HEK293 (cell line): ENCODE measurements at regions of chr1 and their contacts with region 1.

Region 1: DNA sequence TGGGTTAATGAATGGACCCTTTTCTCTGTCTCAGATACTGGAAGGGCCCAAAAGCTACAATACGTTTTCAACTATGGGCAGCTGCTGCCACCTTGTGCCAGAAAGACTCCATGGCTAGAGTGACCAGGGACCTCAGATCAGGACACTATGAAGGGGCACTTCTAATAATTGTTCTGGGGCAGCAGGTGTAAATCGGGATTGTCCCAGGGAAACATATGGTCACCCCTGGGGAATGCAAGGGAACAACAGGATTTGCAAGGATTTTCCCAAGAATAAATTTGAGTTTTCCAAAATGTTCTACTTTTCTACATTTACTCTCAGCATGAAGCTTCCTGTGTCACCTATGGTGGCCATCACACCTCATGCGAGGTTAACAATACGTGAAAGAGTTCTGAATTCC is 12.0 kb upstream of the FCAMR start:
- H3K4me3 ChIP-seq: no peak overlapping the region
- H3K27ac ChIP-seq: no peak overlapping the region
- H3K4me1 ChIP-seq: no peaks in the 10 kb centered on the region
- CTCF ChIP-seq: peak; percentile 63

Region 2: DNA sequence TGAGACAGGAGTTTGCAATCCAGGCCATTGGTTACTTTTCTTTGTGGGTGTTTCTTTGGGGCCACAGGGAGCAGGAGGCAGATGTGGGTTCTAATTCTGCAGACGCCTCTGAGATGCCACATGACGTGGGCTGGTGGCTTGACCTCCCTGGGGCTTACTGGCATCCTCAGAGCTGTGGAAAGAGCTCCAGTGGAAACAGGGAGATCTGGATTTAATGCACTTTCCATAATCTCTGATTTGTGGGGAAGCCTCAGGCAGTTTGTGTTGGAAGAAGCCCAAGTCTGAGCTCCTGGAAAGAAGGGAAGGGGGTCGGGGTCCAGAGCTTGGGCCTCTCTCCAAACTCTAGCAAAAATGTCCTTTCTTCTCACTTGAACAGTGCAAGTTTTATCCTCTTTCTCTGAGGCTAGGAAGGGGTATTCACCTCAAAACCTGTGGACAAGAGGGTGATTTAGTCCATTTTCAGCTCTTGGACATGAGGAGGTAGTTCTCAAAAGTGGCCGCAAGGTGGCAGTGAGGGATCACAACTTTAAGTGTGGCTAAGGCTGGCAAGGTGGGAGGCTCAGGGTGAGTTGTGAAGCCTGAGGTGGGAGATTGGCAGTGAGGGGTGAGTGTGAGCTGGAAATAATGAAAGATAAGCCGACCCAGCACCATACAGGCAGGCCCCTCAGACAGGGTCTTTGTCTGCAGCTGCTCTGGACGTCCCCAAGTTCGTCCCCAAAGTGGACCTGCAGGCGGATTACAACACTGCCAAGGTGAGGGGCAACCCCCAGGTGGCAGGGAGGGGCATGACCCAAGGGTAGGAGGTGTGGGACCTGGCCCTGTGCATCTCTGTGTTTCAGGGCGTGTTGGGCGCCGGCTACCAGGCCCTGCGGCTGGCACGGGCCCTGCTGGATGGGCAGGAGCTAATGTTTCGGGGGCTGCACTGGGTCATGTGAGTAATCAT is 502.8 kb before region 1 on chr1:
- CTCF ChIA-PET with region 1: interaction called, 18 read pairs
- POLR2A ChIA-PET with region 1: no interaction called
- H3K4me3 ChIP-seq: no peak overlapping the region
- H3K27ac ChIP-seq: no peak overlapping the region
- H3K4me1 ChIP-seq: no peaks in the 10 kb centered on the region
- CTCF ChIP-seq: peak; percentile 87

Region 3: DNA sequence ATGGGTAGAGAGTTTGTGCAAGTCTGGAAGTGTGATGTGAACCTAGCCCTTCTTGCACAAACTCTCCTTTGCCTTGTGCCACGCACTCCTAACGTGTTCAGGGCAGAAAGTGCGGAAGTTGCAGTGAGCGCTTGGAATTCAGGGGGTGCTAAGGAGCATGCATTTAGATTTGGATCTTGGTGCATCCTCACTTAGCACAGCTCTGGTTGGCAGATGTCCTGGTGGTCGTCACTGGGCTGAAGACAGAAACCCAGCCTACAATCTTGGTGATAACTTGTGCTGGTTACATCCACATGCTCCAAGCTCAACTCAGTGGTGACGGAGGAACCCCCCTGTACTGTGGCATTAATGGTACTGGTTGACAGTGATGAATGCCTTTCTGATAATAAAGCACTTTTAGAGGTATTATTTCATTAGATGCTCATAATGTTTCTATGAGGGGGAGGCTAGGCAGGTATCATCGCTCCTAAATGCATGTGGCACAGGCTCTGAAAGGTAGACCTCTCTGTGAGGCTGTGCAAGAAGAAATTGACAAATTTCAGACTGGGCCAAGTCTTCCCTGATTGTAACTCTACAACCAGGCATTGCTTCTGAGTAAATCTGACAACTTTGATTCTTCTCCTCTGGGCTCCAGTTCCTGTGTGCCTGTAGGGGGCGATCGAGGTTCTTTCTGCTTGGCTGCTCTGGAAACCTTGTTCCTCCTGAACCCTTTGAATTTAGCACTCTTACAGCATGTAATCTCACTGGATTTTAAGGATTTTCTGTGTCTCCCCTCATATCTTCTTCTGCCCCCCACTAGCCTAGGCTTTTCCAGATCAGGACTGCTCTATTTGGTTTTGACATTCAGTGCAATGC is 256.9 kb before region 1 on chr1:
- CTCF ChIA-PET with region 1: interaction called, 30 read pairs
- POLR2A ChIA-PET with region 1: no interaction called
- H3K4me3 ChIP-seq: no peak overlapping the region
- H3K27ac ChIP-seq: no peak overlapping the region
- H3K4me1 ChIP-seq: no peaks in the 10 kb centered on the region; the same call in 1 of the 2 replicates
- CTCF ChIP-seq: no peak

Region 4: GRCh38 chr1:206808615-206809014 is 173.6 kb before region 1 on chr1:
- CTCF ChIA-PET with region 1: interaction called, 20 read pairs
- POLR2A ChIA-PET with region 1: no interaction called
- H3K4me3 ChIP-seq: no peak overlapping the region
- H3K27ac ChIP-seq: no peak overlapping the region
- H3K4me1 ChIP-seq: no peaks in the 10 kb centered on the region
- CTCF ChIP-seq: no peak; the same call in 1 of the 2 replicates

Region 5: DNA sequence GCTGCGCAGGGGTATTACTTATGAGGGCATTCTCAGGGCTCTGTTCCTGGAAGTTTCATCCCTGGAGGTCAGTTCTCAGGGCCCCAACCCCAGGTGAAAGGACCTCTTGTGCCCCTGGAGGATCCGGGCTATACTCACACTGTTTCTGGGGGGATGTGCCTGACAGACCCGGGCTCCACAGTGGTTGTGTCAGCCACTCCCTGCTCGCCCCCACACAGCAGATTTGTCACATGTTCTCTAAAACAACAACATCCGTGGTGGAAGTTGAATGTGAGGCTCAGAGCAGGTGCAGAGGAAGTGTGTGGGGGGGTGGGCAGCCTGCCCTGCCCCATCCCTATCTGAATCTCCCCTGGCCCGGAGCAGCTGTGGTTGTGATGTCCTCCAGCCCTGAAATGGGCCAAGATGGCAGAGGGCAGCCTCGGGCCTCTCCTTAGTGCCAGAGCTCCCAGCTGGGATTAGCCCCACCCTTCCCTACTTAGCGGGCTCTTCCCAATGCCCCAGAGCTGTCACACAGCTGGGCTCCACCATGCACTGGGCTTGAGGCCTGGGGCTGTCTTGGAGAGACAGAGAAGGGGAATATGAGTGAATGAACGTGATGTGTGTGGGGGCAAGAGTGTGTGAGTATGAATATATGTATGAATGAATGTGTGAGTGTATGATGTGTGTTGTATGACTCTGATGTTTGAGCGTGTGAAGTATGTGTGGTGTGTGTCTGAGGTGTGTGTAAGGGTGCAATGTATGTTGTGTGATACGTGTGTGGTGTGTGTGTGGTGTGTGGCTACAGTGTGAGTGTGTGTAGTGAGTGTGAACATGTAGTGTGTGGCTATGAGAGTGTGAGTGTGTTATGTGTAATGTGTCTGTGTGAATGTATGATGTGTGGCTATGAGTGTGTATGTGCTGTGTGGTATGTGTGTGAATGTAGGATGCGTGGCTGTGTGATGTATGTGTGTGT is 58.9 kb before region 1 on chr1:
- CTCF ChIA-PET with region 1: no interaction called
- POLR2A ChIA-PET with region 1: no interaction called
- H3K4me3 ChIP-seq: no peak overlapping the region
- H3K27ac ChIP-seq: no peak overlapping the region
- H3K4me1 ChIP-seq: no peaks in the 10 kb centered on the region
- CTCF ChIP-seq: no peak

Region 6: DNA sequence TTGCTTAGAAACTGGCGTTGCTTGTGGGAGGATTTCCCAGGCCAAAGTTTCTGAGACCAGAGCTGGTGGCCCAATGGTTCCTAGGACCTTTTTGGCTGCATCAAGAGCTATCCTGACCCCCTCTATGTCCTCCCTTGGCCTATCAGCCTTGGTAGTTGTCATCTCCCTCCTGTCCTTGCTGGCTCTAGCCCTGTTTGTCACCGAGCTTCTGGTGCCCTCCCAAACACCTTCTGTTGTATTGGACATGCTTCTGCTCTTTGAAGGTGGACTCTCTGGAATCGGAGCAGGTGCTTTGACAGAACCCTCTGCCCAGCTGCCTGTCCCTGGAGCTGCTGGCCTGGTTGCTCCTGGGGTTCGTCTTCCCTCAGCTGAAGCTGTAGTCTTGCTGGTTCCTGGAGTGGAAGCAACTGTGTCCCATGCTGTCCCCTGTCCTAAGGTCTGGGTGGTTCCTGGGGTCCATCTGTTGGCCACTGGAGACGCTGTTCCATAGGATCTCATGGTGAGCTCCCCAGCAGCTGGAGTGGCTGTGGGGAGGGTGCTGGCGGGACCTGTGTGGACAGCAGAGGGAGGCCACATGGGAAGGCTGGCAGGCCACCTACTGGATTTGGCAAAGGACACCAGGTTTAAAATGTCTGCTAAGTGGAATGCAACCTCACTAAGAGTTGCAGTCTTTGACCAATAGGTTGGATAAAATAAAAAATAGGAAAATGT is 21.4 kb before region 1 on chr1:
- CTCF ChIA-PET with region 1: interaction called, 12 read pairs
- POLR2A ChIA-PET with region 1: no interaction called
- H3K4me3 ChIP-seq: no peak overlapping the region
- H3K27ac ChIP-seq: no peak overlapping the region
- H3K4me1 ChIP-seq: no peaks in the 10 kb centered on the region
- CTCF ChIP-seq: no peak

Region 7: GRCh38 chr1:206992790-206993189 is 10.6 kb after region 1 on chr1:
- CTCF ChIA-PET with region 1: interaction called, 10 read pairs
- POLR2A ChIA-PET with region 1: no interaction called
- H3K4me3 ChIP-seq: no peak overlapping the region
- H3K27ac ChIP-seq: no peak overlapping the region
- H3K4me1 ChIP-seq: no peaks in the 10 kb centered on the region
- CTCF ChIP-seq: no peak

Region 8: DNA sequence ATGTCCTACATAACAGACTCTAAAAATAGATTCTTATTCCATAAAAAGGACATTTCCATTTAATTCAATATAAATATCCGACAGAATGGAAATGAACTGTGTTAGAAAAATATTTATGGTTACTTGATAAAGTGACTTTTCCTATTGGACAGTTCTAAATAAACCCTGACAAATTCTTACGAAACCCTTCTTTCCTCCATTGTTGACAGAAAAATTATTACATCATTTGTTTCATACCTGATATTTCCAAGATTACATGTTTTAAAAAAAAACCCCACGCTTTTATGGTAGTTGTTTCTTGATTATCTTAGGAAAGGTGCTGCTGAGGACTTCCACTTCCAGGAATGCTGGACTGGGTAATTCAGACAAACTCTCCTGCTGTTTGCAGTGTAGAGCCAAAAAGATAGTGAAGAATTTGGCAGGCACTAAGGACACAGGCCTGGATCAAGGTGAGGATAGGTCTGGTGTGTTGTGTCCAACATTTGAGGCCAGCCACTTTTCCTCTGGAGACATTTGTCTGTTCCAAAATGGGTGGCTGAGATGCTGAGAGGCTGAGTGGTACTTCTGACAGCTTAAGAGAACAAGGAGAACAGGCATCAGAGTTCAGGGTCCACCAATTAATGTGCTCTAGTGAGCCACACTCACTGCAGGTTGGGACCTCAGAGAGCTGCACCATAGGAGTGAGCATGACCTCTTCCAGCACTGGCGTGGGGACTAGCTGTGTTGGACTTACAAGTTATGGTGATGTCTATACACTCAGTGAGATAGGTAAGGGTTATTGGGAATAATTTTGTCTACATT is 57.4 kb after region 1 on chr1:
- CTCF ChIA-PET with region 1: no interaction called
- POLR2A ChIA-PET with region 1: no interaction called
- H3K4me3 ChIP-seq: no peak overlapping the region
- H3K27ac ChIP-seq: no peak overlapping the region
- H3K4me1 ChIP-seq: no peaks in the 10 kb centered on the region
- CTCF ChIP-seq: no peak